ENCODE measurements at regions of chr5 and their contacts with region 1.

Region 1: DNA sequence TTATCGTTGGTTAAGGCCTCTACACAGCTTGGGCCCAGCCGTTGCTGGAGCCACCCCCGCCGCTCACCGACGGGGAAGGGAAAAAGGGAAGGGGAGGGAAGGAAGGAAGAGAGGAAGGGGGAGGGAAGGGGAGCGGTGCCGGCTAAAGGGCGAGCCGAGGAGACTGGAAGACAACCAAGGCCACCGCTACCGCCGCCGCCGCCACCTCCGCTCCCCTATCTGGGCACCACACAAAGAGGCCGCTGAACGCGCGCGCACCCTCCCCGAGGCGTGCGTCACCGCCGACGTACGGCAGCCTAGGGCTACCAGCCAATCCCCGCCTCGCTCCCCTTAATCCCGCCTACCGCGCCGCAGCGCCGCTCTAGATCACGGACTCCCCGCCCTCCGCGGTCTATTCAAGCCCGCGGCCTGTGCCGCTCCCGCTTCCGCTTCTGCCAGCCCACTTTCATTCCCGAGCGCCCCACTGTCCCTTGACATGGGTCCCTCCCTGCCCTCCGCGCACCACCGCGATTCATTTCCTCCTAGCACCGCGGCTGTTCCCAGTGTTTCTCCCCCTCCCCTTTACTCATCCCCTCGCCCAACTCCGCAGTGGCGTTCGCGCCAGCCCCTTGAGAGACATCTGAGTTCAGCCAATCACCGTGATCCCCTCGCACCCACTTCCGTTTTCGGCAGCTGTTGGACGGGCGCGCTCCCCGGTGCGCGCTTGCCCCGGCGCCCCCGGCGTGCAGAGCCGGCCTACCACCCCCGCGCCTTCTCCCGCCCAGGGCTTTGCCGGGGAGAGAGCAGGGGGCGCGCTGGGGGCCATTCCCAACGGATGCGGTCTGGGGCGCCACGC is at the start of gene HNRNPA0:
- DNase-seq: peak; percentile 97
- H3K4me3 Mint-ChIP-seq: peak within 1 kb of the TSS; percentile 92
- H3K27ac Mint-ChIP-seq: peak within 1 kb of the TSS; percentile 98
- H3K4me1 Mint-ChIP-seq: peaks cover 19% of the 10 kb centered on the region
- H3K27me3 Mint-ChIP-seq: no peaks in the 10 kb centered on the region
- total RNA-seq, gene HNRNPA0: 27.2 to 28.6 TPM

Region 2: GRCh38 chr5:137660349-137660817 is 94.0 kb before region 1 on chr5:
- CTCF ChIA-PET with region 1: interaction called, 508 read pairs
- intact Hi-C with region 1: no loop called
- DNase-seq: peak; percentile 88
- H3K4me3 Mint-ChIP-seq: no peak overlapping the region
- H3K27ac Mint-ChIP-seq: no peak overlapping the region
- H3K4me1 Mint-ChIP-seq: peaks cover 9% of the 10 kb centered on the region
- H3K27me3 Mint-ChIP-seq: no peaks in the 10 kb centered on the region

Region 3: DNA sequence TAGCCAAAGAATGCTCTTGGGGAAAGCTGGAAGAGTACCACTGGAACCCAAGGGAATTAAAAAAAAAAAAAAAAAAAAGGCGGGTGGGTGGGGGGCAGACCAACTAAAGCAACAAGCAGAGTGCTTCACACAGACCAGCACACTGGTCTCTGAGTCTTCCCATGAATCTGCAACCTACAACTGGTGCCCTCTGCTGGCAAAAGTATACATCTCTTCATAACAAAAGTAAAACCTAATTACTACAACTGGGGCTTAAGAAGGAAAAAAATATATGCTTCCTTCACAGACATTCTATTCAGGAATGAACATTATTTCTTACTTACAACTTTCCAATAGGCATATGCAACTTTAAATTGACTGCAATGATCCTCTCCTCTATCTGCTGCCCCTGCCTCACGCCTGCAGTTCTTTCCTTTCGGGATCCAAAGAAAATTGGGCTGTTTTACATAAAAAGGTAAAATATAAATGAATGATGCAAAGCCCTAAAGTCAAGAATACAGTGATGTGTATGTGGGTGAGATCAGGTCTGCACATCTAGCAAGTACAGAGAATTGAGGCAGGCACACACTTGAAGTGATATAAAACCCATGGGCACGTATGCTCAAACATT is 11.2 kb before region 1 on chr5:
- CTCF ChIA-PET with region 1: interaction called, 56 read pairs
- intact Hi-C with region 1: no loop called
- DNase-seq: peak; percentile 78
- H3K4me3 Mint-ChIP-seq: no peak overlapping the region
- H3K27ac Mint-ChIP-seq: no peak overlapping the region
- H3K4me1 Mint-ChIP-seq: peaks cover 15% of the 10 kb centered on the region
- H3K27me3 Mint-ChIP-seq: no peaks in the 10 kb centered on the region

Region 4: DNA sequence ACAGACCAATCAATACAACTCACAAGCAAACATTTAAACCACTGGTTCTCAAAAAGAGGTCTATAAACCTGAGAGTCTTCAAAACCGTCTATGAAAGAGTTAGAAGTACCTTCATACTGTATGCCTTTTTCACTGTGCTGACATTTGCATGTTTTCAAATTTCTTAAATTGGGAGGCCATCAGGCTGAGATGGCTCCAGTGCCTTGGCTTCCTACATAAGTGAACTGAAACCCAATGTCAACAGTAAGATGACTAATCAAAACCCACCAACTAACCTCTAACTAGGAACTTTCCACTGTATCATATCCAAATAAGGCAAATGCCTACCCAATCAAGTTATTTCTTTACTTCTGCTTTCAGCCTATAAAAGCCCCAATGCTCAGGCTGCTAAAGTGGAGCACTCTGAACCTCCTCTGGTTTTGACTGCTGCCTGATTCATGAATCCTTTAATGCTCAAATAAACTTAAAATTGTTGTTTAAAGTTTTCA is 243.4 kb after region 1 on chr5:
- CTCF ChIA-PET with region 1: no interaction called
- intact Hi-C with region 1: loop called (anchors 1 kb)
- DNase-seq: peak; percentile 50
- H3K4me3 Mint-ChIP-seq: no peak overlapping the region
- H3K27ac Mint-ChIP-seq: peak overlapping the region; percentile 50
- H3K4me1 Mint-ChIP-seq: peaks cover 36% of the 10 kb centered on the region
- H3K27me3 Mint-ChIP-seq: no peaks in the 10 kb centered on the region

Region 5: DNA sequence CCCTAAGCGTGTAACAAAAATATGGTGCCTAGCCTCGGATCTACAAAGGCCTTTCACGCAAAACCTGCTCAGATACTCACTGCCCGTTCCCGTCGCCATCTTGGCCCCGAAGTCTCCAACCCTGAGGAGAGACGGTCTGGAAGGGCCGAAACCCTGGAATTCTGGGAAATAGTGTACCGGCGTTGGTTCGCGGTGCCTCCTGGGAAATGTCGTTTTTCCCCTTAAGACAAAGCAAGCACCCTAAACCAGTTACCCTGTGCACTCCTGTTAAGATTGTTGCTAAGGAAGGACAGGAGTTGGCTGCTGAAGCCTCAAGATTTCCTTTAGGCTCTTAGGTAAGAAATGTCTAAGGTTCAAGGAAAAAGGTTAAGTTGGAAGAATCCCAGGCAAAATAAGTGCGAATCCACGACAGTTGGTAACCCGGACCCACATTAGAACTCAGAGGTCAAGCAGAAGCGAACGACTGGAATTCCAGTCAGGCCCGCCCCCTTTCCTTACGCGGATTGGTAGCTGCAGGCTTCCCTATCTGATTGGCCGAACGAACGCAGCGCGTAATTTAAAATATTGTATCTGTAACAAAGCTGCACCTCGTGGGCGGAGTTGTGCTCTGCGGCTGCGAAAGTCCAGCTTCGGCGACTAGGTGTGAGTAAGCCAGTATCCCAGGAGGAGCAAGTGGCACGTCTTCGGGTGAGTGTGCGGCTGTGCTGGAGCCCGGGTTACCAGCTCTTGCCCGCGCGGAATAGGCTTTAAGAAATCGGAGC is 424.4 kb after region 1 on chr5 and contains the starts of genes BRD8 and KIF20A:
- CTCF ChIA-PET with region 1: no interaction called
- intact Hi-C with region 1: loop called (anchors 1 kb)
- DNase-seq: peak; percentile 98
- H3K4me3 Mint-ChIP-seq: no peak within 1 kb of the TSS
- H3K27ac Mint-ChIP-seq: peak within 1 kb of the TSS; percentile 63
- H3K4me1 Mint-ChIP-seq: peaks cover 12% of the 10 kb centered on the region
- H3K27me3 Mint-ChIP-seq: no peaks in the 10 kb centered on the region
- total RNA-seq, gene BRD8: 94.8 to 95.6 TPM
- total RNA-seq, gene KIF20A: 78.9 to 81.9 TPM

Region 6: GRCh38 chr5:138352071-138352721 is 597.9 kb after region 1 on chr5 and contains the start of gene KDM3B:
- CTCF ChIA-PET with region 1: no interaction called
- intact Hi-C with region 1: loop called (anchors 1 kb)
- DNase-seq: peak; percentile 91
- H3K4me3 Mint-ChIP-seq: peak within 1 kb of the TSS; percentile 96
- H3K27ac Mint-ChIP-seq: peak within 1 kb of the TSS; percentile 94
- H3K4me1 Mint-ChIP-seq: peaks cover 37% of the 10 kb centered on the region
- H3K27me3 Mint-ChIP-seq: no peaks in the 10 kb centered on the region
- total RNA-seq, gene KDM3B: 33.4 to 36.2 TPM

Region 7: GRCh38 chr5:139293504-139294373 is 1539.4 kb after region 1 on chr5 and contains the start of gene MATR3:
- CTCF ChIA-PET with region 1: no interaction called
- intact Hi-C with region 1: loop called (anchors 10 kb)
- DNase-seq: peak; percentile 96
- H3K4me3 Mint-ChIP-seq: peak within 1 kb of the TSS; percentile 89
- H3K27ac Mint-ChIP-seq: peak within 1 kb of the TSS; percentile 97
- H3K4me1 Mint-ChIP-seq: peaks cover 37% of the 10 kb centered on the region
- H3K27me3 Mint-ChIP-seq: no peaks in the 10 kb centered on the region
- total RNA-seq, gene MATR3: 137 to 164 TPM

Measured in activated naive CD4-positive, alpha-beta T cell treated with anti-CD3 and anti-CD28 coated beads for 36 hours (primary cell).